Aorta (tissue), 5 donors: ENCODE measurements at regions of chr2 and their contacts with region 1.

Region 1: GRCh38 chr2:66495788-66496640 is 61.1 kb downstream of the MEIS1 start:
- DNase-seq: peak; percentile 73 to 87
- ATAC-seq: peak; percentile 75
- H3K4me3 ChIP-seq: no peak overlapping the region
- H3K27ac ChIP-seq: peak overlapping the region; percentile 63 to 75
- H3K4me1 ChIP-seq: peaks cover 3 to 11% of the 10 kb centered on the region in 2 donors
- H3K27me3 ChIP-seq: no peaks in the 10 kb centered on the region

Region 2: DNA sequence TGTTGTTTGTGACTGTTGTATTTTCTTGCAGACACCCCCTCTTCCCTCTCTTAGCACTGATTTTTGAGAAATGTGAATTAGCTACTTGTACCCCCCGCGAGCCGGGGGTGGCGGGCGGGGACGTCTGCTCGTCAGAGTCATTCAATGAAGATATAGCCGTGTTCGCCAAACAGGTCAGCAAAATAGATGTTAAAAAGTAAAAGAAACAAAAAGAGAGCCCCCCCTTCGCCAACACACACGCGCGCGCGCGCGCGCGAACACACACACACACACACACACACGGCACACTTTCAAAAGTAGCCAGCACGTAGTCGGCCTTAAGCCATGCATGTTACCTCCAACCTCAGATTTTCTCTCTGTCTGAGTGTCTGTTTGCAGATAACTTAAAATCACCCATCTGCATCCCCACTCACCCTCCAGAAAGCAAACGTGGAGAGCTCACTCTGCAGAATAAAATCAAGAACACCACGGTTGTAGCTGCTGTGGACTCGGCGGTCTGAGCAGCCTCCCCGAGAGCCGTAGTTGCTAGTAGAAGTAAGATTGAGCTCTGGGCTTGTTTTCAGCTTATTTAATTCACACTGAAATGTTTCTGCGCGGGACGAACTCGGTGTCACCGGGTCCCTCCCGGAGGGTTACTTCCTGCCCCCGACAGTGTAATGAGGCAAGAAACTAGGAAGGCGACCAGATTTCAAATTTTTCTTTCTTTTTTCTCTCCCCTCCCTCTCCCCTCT is 56.0 kb before region 1 on chr2:
- intact Hi-C with region 1: loop called (anchors 2 to 5 kb)
- DNase-seq: peak in 1 of 2 donors; percentile 46
- ATAC-seq: no peak
- H3K4me3 ChIP-seq: peak overlapping the region; percentile 70 to 91
- H3K27ac ChIP-seq: peak overlapping the region; percentile 89 to 98
- H3K4me1 ChIP-seq: no peaks in the 10 kb centered on the region
- H3K27me3 ChIP-seq: no peaks in the 10 kb centered on the region

Region 3: GRCh38 chr2:66478731-66479316 is 17.2 kb before region 1 on chr2:
- intact Hi-C with region 1: loop called in 1 of 2 experiments (anchors 2 kb)
- DNase-seq: no peak
- ATAC-seq: no peak
- H3K4me3 ChIP-seq: no peak overlapping the region
- H3K27ac ChIP-seq: peak overlapping the region in 1 of 2 donors; percentile 36
- H3K4me1 ChIP-seq: peaks cover 6 to 10% of the 10 kb centered on the region in 2 donors
- H3K27me3 ChIP-seq: no peaks in the 10 kb centered on the region

Region 4: DNA sequence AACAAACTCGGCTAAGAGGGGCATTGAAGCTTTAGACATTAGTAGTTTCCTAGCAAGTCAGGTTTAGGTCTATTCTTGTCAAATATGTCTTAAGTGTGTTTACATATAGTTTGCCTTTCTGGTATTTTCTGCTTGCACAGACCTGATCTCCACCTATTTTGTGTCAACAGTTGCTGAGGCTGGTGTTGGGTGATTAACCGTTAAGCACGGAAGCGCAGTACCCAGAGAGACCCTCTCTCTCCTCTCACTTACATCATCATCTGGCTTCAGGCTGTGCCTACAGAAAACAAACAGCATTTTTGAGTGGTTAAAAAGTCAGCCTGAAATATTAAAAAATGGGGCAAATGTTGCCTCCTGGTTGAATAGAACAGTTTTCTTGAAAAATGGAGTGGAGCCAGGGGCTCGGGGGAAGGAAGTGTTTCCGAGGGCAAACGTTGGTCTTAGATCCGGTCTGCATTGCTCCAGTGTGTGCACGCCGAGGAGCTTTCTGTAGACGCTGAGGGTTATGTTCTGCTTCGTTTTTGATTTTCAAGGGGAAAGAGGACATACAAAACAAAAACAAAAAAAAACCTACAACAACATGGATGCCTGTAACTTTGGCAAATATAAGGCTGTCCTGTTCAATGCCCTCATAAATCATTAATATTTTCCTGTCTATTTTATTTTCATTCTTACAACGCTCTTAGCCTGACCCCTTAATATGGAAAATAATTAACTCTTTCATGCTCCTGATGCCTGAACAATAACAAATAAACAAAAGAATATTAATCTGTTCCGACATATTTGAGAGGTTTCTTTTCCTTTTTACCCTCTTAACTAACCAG is 59.7 kb after region 1 on chr2:
- intact Hi-C with region 1: loop called in 1 of 2 experiments (anchors 5 kb)
- DNase-seq: no peak
- ATAC-seq: peak; percentile 70
- H3K4me3 ChIP-seq: peak overlapping the region in 1 of 2 donors; percentile 72
- H3K27ac ChIP-seq: peak overlapping the region; percentile 76 to 86
- H3K4me1 ChIP-seq: peaks cover 0 to 11% of the 10 kb centered on the region in 2 donors
- H3K27me3 ChIP-seq: no peaks in the 10 kb centered on the region